Activated naive CD4-positive, alpha-beta T cell treated with anti-CD3 and anti-CD28 coated beads, Interleukin-2, amount 10 ng/mL, durations not matched to agents 7 days and 5 days (primary cell): ENCODE measurements at regions of chr11 and their contacts with region 1.

Region 1: GRCh38 chr11:6362873-6363678 is 27.2 kb upstream of the SMPD1 start:
- DNase-seq: peak; percentile 82
- H3K4me3 Mint-ChIP-seq: no peak overlapping the region
- H3K27ac Mint-ChIP-seq: no peak overlapping the region
- H3K4me1 Mint-ChIP-seq: no peaks in the 10 kb centered on the region
- H3K27me3 Mint-ChIP-seq: peaks cover 8% of the 10 kb centered on the region

Region 2: GRCh38 chr11:6022956-6023355 is 340.1 kb before region 1 on chr11:
- CTCF ChIA-PET with region 1: interaction called, 12 read pairs
- DNase-seq: no peak
- H3K4me3 Mint-ChIP-seq: no peak overlapping the region
- H3K27ac Mint-ChIP-seq: no peak overlapping the region
- H3K4me1 Mint-ChIP-seq: no peaks in the 10 kb centered on the region
- H3K27me3 Mint-ChIP-seq: peaks cover 13% of the 10 kb centered on the region

Region 3: DNA sequence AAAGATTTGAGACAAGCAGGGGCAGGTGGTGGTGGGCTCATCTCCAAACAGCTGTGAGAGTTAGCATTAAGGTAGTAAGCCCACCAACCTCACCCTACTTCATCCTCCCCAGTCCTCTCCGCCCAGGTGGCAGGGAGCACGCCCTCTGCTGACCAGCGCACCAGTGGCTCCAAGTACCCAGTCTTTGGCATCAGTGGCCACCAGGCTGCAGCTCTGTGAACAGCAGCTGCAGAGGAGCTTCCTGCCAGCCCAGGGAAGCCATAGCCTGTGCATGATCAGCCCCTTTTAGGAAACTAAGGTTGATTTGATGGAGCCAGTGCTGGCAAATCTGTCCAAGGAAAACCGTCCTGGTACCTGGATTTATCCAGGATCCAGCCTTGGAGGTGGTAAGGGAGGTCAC is 64.5 kb before region 1 on chr11:
- CTCF ChIA-PET with region 1: interaction called, 12 read pairs
- DNase-seq: no peak
- H3K4me3 Mint-ChIP-seq: no peak overlapping the region
- H3K27ac Mint-ChIP-seq: no peak overlapping the region
- H3K4me1 Mint-ChIP-seq: no peaks in the 10 kb centered on the region
- H3K27me3 Mint-ChIP-seq: peaks cover 21% of the 10 kb centered on the region

Region 4: DNA sequence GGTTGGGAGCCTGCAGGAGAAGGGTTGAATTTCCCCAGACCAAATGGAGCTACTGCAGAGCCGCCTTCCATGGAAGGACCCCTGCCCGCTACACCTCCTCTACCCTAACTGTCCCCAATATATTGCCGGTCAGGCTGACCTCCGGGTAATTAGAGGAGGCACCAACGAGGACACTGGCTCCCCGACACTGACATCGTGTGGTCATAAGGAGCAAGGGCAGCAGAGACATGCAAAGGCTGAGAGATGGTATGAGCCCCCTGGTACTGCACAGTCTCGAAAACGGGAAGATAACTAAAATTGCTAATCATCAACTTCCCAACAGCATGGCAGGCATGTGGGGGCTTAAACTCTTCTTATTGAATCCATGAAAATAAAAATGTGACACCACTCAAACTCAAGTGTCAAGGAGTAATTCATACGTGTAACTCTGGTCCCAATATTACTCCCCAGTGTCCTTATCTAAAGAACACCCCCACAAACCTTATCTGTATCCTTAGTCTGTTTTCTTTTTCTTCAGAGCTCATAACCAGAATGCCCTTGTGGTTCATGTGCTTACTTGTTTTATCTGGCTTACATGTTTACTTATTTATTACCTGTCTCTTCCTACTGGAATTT is 47.2 kb before region 1 on chr11:
- CTCF ChIA-PET with region 1: interaction called, 35 read pairs
- DNase-seq: peak; percentile 44
- H3K4me3 Mint-ChIP-seq: no peak overlapping the region
- H3K27ac Mint-ChIP-seq: no peak overlapping the region
- H3K4me1 Mint-ChIP-seq: peaks cover 13% of the 10 kb centered on the region
- H3K27me3 Mint-ChIP-seq: peaks cover 63% of the 10 kb centered on the region

Region 5: DNA sequence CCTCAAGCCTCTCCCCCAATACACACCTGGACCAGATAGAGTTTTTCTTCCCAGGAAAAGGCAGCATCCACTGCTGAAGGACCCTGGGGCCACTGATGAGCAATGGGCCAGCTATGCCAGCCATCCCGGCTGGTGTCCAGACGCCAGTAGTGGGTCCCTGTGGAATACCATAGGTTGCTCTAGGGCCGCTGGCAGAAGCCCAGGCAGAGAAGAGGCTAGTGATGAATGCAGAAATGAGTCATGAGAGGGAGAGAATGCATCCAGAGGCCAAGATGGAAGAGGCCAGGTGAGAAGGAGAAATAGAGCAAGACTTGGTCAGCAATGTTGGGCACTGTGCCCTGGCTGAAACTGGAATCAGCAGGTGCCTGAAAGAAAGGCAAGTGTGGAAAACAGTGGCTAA is 68.8 kb after region 1 on chr11:
- CTCF ChIA-PET with region 1: no interaction called
- DNase-seq: no peak
- H3K4me3 Mint-ChIP-seq: no peak overlapping the region
- H3K27ac Mint-ChIP-seq: no peak overlapping the region
- H3K4me1 Mint-ChIP-seq: peaks cover 4% of the 10 kb centered on the region
- H3K27me3 Mint-ChIP-seq: peaks cover 6% of the 10 kb centered on the region

Region 6: DNA sequence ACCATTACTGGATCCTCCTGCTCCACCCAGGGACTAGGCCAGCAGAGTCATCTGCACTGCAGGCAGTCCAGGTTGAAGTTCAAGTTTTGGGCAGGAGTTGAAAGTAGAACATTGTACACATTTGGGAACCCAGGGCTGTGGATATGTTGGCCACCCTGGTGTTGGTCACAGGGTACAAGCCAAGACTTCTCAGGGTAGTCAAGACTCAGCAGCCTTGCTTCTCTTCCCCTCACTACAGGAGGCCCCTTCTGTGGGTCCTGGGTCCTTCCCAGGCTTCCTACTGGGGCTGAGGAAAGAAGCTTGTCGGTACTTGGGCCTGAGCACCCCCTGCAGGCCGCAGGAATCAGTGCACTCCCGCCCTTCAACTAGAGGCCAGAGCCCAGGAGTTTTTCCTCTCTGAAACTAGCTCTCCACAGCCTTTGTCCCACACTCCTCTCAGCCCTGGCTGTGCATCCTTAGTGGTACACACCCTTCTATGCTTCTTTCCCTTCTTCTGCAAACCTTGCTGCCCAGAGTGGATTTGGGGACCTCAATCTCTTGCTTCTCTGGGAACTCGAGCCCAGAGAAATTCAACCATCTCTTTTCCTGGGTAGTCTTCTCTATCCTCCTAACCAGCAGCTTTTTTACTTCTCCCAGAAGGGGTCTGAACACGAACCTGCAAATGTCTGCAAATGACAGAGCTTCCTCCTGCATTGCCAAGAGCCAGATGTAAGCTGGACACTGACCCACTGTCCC is 80.4 kb after region 1 on chr11:
- CTCF ChIA-PET with region 1: interaction called, 23 read pairs
- DNase-seq: peak; percentile 70
- H3K4me3 Mint-ChIP-seq: no peak overlapping the region
- H3K27ac Mint-ChIP-seq: no peak overlapping the region
- H3K4me1 Mint-ChIP-seq: no peaks in the 10 kb centered on the region
- H3K27me3 Mint-ChIP-seq: peaks cover 9% of the 10 kb centered on the region